Psoas muscle (tissue), 8 donors: ENCODE measurements at regions of chr5 and their contacts with region 1.

Region 1: GRCh38 chr5:172479044-172479783 is 24.9 kb upstream of the SH3PXD2B start:
- DNase-seq: peak; percentile 85 to 89
- ATAC-seq: peak; percentile 93 to 98 (median 96)
- H3K4me3 ChIP-seq: peak overlapping the region; percentile 22
- H3K27ac ChIP-seq: peak overlapping the region; percentile 46
- H3K4me1 ChIP-seq: no peaks in the 10 kb centered on the region
- H3K27me3 ChIP-seq: no peaks in the 10 kb centered on the region
- CTCF ChIP-seq: peak; percentile 73

Region 2: DNA sequence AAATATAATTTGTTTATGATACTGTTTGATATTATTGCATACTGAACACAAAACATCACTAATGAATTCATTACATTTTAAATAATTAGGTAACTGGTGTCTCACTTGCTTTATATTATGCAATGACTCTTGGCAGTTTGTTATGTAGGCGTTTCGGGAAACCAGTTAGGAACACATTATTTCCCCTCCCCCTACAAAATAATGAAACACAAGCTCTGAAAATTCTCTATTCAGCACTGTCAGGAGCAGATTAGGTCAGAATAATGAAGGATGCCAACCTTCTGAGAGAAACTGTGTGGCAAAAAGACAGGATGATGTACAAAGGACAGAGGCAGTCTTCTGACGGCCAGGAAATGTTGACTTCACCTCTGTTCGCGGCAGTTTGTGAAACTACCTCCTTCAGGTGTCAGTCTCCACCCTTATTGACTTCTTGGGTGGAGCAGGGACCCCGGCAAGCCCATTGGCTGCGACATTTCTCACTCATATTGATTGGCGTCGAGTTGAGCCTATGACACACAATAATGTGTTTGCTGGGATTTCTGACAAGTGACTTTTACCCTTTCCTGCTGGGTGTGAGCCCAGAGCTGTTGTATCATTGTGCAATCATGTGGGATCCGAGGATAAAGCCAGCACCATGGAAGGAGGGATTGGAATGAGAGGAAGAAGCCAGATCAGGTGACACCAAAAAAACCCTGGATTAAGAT is 58.8 kb before region 1 on chr5:
- intact Hi-C with region 1: no loop called
- DNase-seq: peak; percentile 65 to 73
- ATAC-seq: peak; percentile 57 to 71 (median 62)
- H3K4me3 ChIP-seq: no peak overlapping the region
- H3K27ac ChIP-seq: peak overlapping the region; percentile 27
- H3K4me1 ChIP-seq: no peaks in the 10 kb centered on the region
- H3K27me3 ChIP-seq: no peaks in the 10 kb centered on the region
- CTCF ChIP-seq: no peak

Region 3: DNA sequence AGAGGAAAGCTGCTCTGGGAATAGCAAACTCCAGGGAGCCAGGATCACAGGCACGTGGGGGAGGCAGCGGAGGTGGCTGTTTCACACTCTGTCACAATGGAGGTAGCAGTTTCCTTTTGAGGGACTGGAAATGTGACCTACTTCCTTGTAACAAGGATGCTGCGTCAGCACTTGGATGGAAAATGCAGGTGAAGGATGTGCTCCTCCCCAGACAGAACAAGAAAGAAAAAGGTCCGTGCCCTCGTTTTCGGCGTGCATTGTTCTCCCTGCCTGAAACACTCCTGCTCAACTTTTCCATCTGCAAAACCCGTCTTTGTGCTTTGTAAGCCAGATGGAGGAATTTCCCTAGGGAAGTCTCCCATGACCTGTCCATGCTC is 30.2 kb after region 1 on chr5:
- intact Hi-C with region 1: no loop called
- DNase-seq: no peak
- ATAC-seq: peak; percentile 25 to 52 (median 36)
- H3K4me3 ChIP-seq: no peak overlapping the region
- H3K27ac ChIP-seq: peak overlapping the region; percentile 27
- H3K4me1 ChIP-seq: no peaks in the 10 kb centered on the region
- H3K27me3 ChIP-seq: peaks cover 0 to 7% (median 2%) of the 10 kb centered on the region in 3 donors
- CTCF ChIP-seq: no peak

Region 4: GRCh38 chr5:172594867-172595466 is 115.8 kb after region 1 on chr5:
- intact Hi-C with region 1: loop called in 1 of 2 experiments (anchors 5 kb)
- DNase-seq: no peak
- ATAC-seq: no peak
- H3K4me3 ChIP-seq: no peak overlapping the region
- H3K27ac ChIP-seq: no peak overlapping the region
- H3K4me1 ChIP-seq: no peaks in the 10 kb centered on the region
- H3K27me3 ChIP-seq: no peaks in the 10 kb centered on the region
- CTCF ChIP-seq: no peak

Region 5: GRCh38 chr5:172640822-172641358 is 161.7 kb after region 1 on chr5 and contains the start of gene NEURL1B:
- intact Hi-C with region 1: loop called in 1 of 2 experiments (anchors 1 kb)
- DNase-seq: peak; percentile 77 to 86
- ATAC-seq: peak; percentile 72 to 85 (median 80)
- H3K4me3 ChIP-seq: peak within 1 kb of the TSS; percentile 81
- H3K27ac ChIP-seq: peak within 1 kb of the TSS; percentile 78
- H3K4me1 ChIP-seq: peaks cover 20% of the 10 kb centered on the region
- H3K27me3 ChIP-seq: peaks cover 0 to 53% (median 3%) of the 10 kb centered on the region in 3 donors
- CTCF ChIP-seq: peak; percentile 14
- total RNA-seq, gene NEURL1B: 13.7 to 20.4 (median 16.4) TPM

Region 6: DNA sequence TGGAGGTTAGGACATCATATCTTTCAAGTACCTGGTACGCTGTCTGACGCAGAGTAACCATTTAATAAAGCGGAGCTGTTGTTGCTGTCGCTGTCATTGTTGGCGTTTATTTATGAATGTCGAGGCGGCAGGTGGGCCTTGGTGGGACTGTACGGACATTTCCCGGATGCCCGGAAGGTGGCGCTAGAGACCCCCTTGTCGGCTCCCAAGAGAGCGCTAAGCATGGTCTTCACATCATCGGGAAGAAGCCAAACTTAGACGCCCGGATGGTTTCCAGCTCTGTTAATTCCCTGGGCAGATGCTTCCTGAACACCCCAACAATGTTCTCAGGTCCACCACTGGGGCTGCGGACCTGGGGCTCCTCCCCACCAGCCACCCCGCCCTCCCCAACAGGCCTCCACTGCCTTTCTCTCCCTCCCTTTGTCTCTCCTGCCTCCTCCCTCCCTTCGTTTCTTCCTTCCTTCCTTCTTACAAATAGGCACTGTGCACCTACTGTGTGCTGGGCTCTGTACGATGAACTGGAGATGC is 237.6 kb after region 1 on chr5:
- intact Hi-C with region 1: no loop called
- DNase-seq: peak; percentile 85 to 92
- ATAC-seq: peak; percentile 80 to 87 (median 83)
- H3K4me3 ChIP-seq: peak overlapping the region; percentile 30
- H3K27ac ChIP-seq: peak overlapping the region; percentile 15
- H3K4me1 ChIP-seq: peaks cover 8% of the 10 kb centered on the region
- H3K27me3 ChIP-seq: no peaks in the 10 kb centered on the region
- CTCF ChIP-seq: peak; percentile 92

Region 7: DNA sequence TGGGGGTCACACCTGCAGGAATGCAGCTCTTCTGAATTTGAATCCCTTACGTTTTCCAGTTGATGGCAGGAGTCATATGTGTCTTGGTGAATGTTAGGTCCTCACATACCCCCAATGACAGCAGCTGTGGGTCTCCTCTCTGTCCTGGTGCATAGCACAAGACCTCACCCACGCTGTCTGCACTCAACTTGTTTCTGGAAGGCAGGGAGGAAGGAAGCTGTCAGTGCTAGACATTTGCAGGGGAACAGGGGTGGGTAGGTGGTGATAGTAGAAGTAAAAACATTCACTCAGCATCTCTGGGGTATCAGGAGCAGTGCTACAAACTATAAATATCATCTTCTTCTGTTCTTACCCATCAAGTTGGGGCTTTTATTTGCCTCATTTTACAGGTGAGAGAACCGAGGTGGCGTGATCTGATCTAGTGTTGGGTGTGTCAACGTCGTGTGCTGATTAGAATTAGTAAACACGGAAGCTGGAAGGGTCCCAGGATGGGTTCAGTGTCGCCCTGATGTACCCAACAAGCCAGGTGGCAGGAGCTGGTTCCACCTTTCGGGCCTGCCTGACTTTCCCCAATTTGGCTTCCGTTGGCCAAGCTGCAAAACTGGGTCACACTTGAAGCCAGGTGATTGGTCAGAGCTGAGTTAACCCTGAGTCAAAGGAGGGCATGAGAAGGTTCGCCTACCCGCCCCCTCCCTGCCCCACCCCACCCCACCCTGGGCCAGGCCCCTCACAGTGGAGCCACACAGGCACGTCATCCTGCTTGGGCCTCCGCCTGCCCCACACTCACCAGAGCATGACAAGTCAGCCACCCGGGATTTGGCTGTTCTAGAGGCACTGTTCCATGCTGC is 370.6 kb after region 1 on chr5:
- intact Hi-C with region 1: no loop called
- DNase-seq: peak; percentile 41 to 72
- ATAC-seq: peak; percentile 19 to 57 (median 26)
- H3K4me3 ChIP-seq: no peak overlapping the region
- H3K27ac ChIP-seq: no peak overlapping the region
- H3K4me1 ChIP-seq: peaks cover 52% of the 10 kb centered on the region
- H3K27me3 ChIP-seq: no peaks in the 10 kb centered on the region
- CTCF ChIP-seq: no peak